Heart left ventricle (tissue), 16 donors: ENCODE measurements at regions of chr2 and their contacts with region 1.

Region 1: DNA sequence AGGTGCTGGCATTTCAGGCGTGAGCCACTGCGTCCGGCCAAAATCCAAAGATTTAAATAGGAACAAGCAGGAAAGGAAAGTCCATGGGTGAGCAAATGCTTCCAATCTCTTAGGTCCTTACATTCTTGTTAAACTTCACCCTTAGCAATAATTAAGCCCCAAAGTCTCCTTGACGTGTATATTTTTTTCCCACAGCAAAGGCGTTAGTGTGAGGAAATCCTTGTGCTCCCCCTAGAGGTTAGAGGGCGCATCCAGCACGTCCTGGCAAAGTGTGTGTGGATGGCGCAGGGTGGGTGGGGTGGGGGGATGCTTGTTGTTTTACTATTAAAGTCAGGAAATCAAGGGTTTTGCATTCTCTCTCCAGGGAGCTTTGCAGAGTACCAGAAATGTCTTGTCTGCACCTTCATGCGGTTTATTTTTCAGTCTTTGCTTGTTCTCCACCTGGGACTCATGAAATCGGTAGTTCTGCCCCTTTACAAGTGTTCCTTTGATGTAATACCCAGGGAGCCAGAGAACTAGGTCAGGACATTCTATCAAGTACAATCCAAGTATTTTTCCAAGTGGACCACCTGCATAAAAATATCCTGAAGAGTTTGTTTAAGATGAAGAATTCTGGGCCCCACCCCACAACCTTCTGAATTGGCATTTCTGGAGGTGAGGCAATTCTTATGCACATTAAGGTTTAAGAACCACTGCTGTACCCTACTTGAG is 22.2 kb upstream of the ITSN2 start:
- DNase-seq: peak in 3 of 5 donors; percentile 46 to 58 (median 47)
- ATAC-seq: peak in 3 of 4 donors; percentile 89 to 90 (median 89)
- H3K4me3 ChIP-seq: no peak overlapping the region
- H3K27ac ChIP-seq: no peak overlapping the region
- H3K4me1 ChIP-seq: peaks cover 0 to 5% (median 0%) of the 10 kb centered on the region in 12 donors
- H3K27me3 ChIP-seq: no peaks in the 10 kb centered on the region
- CTCF ChIP-seq: peak; percentile 68 to 82 (median 79)
- POLR2A ChIP-seq: no peak

Region 2: DNA sequence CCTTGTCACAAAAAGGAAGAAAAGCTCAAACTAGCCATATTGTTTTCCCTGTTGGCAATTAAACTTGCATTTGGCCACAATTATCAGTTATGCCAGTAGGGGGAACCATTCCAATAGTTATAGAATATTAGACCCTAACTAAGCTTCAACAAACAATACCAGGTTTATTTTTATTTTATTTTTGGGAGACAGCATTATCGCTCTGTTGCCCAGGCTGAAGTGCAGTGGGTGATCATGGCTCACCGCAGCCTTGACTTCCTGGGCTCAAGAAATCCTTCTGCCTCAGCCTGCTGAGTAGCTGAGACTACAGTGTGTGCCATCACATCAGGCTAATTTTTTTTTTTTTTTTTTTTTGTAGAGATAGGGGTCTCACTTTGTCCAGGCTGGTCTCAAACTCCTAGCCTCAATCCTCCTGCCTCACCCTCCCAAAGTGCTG is 557.7 kb before region 1 on chr2:
- intact Hi-C with region 1: loop called in 1 of 10 experiments (anchors 10 kb)
- DNase-seq: no peak
- ATAC-seq: peak in 2 of 4 donors; percentile 24 to 46
- H3K4me3 ChIP-seq: no peak overlapping the region
- H3K27ac ChIP-seq: no peak overlapping the region
- H3K4me1 ChIP-seq: peaks cover 0 to 12% (median 0%) of the 10 kb centered on the region in 12 donors
- H3K27me3 ChIP-seq: no peaks in the 10 kb centered on the region
- CTCF ChIP-seq: peak; percentile 53 to 76 (median 67)
- POLR2A ChIP-seq: no peak

Region 3: GRCh38 chr2:24046930-24047702 is 335.4 kb before region 1 on chr2 and contains the start of gene WDCP:
- intact Hi-C with region 1: no loop called
- DNase-seq: peak; percentile 93 to 97 (median 96)
- ATAC-seq: peak; percentile 99 to 100 (median 100)
- H3K4me3 ChIP-seq: peak within 1 kb of the TSS; percentile 52 to 87 (median 73)
- H3K27ac ChIP-seq: peak within 1 kb of the TSS in 10 of 12 donors; percentile 33 to 79 (median 68)
- H3K4me1 ChIP-seq: peaks cover 0 to 39% (median 19%) of the 10 kb centered on the region in 12 donors
- H3K27me3 ChIP-seq: no peaks in the 10 kb centered on the region
- CTCF ChIP-seq: no peak
- POLR2A ChIP-seq: peak in 1 of 2 donors; percentile 86
- total RNA-seq, gene WDCP: 4.9 to 9.8 (median 6.1) TPM

Region 4: DNA sequence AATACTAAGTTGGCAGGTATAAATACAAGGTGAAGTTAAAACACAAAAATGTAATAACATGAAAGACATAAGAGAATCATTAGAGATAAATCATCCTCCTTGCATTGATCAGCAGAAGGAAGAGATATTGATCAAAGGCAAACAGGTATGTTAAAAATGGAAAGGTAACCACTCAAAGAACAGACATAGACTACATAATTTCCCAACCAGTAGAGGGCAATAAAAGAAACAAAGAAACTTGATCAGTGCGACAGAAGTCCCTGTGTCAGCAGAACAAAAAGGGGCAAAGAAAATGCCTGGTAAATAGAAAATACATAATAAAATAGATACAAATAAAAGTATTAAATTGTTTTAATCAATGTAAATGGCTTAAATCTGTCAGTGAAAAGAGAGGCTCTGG is 154.0 kb before region 1 on chr2:
- intact Hi-C with region 1: loop called in 9 of 10 experiments (anchors 1 to 10 kb)
- DNase-seq: no peak
- ATAC-seq: no peak
- H3K4me3 ChIP-seq: no peak overlapping the region
- H3K27ac ChIP-seq: no peak overlapping the region
- H3K4me1 ChIP-seq: no peaks in the 10 kb centered on the region
- H3K27me3 ChIP-seq: no peaks in the 10 kb centered on the region
- CTCF ChIP-seq: peak in 9 of 12 donors; percentile 20 to 52 (median 36)
- POLR2A ChIP-seq: no peak

Region 5: GRCh38 chr2:24276349-24276899 is 106.1 kb before region 1 on chr2:
- intact Hi-C with region 1: loop called in 2 of 10 experiments (anchors 10 kb)
- DNase-seq: no peak
- ATAC-seq: peak in 1 of 4 donors; percentile 32
- H3K4me3 ChIP-seq: no peak overlapping the region
- H3K27ac ChIP-seq: no peak overlapping the region
- H3K4me1 ChIP-seq: peaks cover 0 to 31% (median 10%) of the 10 kb centered on the region in 12 donors
- H3K27me3 ChIP-seq: no peaks in the 10 kb centered on the region
- CTCF ChIP-seq: no peak
- POLR2A ChIP-seq: no peak

Region 6: DNA sequence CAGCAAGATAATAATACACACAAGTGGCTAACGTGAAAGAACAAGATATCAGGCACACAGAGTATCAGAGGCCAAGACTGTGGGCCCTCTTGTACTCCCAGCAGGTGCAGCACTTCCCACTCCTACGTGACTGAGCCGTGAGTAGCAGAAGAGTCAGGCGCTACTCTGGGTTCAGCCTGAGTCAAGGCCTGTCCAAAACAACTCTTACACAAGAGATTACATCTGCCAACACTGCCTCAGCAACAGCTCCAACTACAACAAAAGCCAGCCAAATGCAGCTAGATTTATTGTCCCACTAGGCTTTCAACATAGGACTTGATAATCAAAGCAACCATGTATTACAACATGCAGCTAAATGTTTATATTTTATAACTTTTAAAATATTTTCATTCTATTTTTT is 78.4 kb before region 1 on chr2:
- intact Hi-C with region 1: loop called in 1 of 10 experiments (anchors 5 kb)
- DNase-seq: peak; percentile 61 to 90 (median 67)
- ATAC-seq: peak; percentile 99 to 100 (median 100)
- H3K4me3 ChIP-seq: no peak overlapping the region
- H3K27ac ChIP-seq: peak overlapping the region in 11 of 12 donors; percentile 18 to 79 (median 35)
- H3K4me1 ChIP-seq: peaks cover 0 to 17% (median 7%) of the 10 kb centered on the region in 12 donors
- H3K27me3 ChIP-seq: no peaks in the 10 kb centered on the region
- CTCF ChIP-seq: no peak
- POLR2A ChIP-seq: no peak

Region 7: DNA sequence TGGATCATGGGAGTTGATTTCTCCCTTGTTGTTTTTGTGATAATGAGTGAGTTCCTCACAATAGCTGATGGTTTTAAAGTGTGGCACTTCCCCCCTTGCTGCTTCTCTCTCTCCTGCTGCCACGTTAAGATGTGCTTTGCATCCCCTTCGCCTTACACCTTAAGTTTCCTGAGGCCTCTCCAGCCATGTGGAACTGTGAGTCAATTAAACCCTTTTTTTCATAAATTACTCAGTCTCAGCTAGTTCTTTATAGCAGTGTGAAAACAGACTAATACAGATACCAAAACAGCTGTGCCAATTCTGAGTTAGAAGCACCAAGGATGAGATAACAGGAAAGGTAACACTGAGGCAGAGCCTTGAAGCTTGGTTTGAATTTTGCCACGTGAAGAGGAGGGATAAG is 66.8 kb before region 1 on chr2:
- intact Hi-C with region 1: loop called in 1 of 10 experiments (anchors 5 kb)
- DNase-seq: no peak
- ATAC-seq: no peak
- H3K4me3 ChIP-seq: no peak overlapping the region
- H3K27ac ChIP-seq: no peak overlapping the region
- H3K4me1 ChIP-seq: peaks cover 0 to 26% (median 11%) of the 10 kb centered on the region in 12 donors
- H3K27me3 ChIP-seq: no peaks in the 10 kb centered on the region
- CTCF ChIP-seq: no peak
- POLR2A ChIP-seq: no peak

Region 8: GRCh38 chr2:24730481-24730880 is 348.0 kb after region 1 on chr2:
- intact Hi-C with region 1: no loop called
- DNase-seq: no peak
- ATAC-seq: no peak
- H3K4me3 ChIP-seq: no peak overlapping the region
- H3K27ac ChIP-seq: no peak overlapping the region
- H3K4me1 ChIP-seq: no peaks in the 10 kb centered on the region
- H3K27me3 ChIP-seq: no peaks in the 10 kb centered on the region
- CTCF ChIP-seq: no peak
- POLR2A ChIP-seq: no peak